Caco-2 (cell line): ENCODE measurements at regions of chr7 and their contacts with region 1.

Region 1: GRCh38 chr7:99679032-99679399 is 780 bp downstream of the CYP3A5 start:
- DNase-seq: peak; percentile 54 to 68
- H3K4me3 ChIP-seq: peak overlapping the region; percentile 3; the same call in 1 of the 2 replicates
- H3K4me3 Mint-ChIP-seq: peak overlapping the region; percentile 34
- H3K27ac Mint-ChIP-seq: peak overlapping the region; percentile 70
- H3K4me1 ChIP-seq: peaks cover 28% of the 10 kb centered on the region
- H3K4me1 Mint-ChIP-seq: peaks cover 18% of the 10 kb centered on the region
- H3K27me3 ChIP-seq: no peaks in the 10 kb centered on the region
- H3K27me3 Mint-ChIP-seq: no peaks in the 10 kb centered on the region
- CTCF ChIP-seq: no peak

Region 2: GRCh38 chr7:99752390-99752789 is 73.4 kb after region 1 on chr7:
- CTCF ChIA-PET with region 1: no interaction called
- POLR2A ChIA-PET with region 1: no interaction called
- intact Hi-C with region 1: no loop called
- DNase-seq: peak; percentile 16 to 40
- H3K4me3 ChIP-seq: no peak overlapping the region
- H3K4me3 Mint-ChIP-seq: no peak overlapping the region
- H3K27ac Mint-ChIP-seq: no peak overlapping the region
- H3K4me1 ChIP-seq: peaks cover 12% of the 10 kb centered on the region
- H3K4me1 Mint-ChIP-seq: peaks cover 17% of the 10 kb centered on the region
- H3K27me3 ChIP-seq: no peaks in the 10 kb centered on the region
- H3K27me3 Mint-ChIP-seq: no peaks in the 10 kb centered on the region
- CTCF ChIP-seq: no peak

Region 3: DNA sequence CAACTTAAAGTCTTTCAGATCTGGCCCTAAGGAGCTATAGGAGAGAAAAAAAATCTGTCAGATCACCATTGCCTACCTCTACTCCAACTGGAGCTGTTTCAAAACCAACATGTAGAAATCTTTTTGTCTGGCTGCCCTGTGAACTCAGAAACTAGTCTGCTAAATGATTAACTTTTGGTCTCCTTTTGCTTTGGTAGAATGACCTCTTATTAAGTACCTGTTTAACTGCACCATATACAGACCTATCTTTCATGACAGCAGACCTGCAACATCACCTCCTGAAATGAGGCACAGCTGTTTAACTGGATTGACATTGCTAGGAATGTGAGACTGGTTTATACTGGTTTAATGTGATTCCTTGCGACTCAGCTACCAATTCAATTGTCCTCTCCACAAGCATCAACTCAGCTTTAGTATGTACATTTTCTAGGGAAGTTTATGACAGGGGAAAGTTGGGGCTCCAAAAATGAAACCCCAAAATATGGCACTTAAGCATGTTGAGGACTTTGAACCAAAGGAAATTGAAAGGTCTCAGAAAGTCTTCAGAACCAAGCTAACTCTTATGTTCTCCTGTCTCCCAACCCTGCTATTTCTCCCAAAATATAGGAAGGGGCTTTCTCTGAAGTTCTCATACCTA is 150.6 kb after region 1 on chr7:
- CTCF ChIA-PET with region 1: no interaction called
- POLR2A ChIA-PET with region 1: no interaction called
- intact Hi-C with region 1: loop called (anchors 5 kb)
- DNase-seq: peak; percentile 57 to 65
- H3K4me3 ChIP-seq: no peak overlapping the region
- H3K4me3 Mint-ChIP-seq: peak overlapping the region; percentile 11
- H3K27ac Mint-ChIP-seq: peak overlapping the region; percentile 29
- H3K4me1 ChIP-seq: peaks cover 59% of the 10 kb centered on the region
- H3K4me1 Mint-ChIP-seq: peaks cover 53% of the 10 kb centered on the region
- H3K27me3 ChIP-seq: no peaks in the 10 kb centered on the region
- H3K27me3 Mint-ChIP-seq: no peaks in the 10 kb centered on the region
- CTCF ChIP-seq: no peak